ENCODE measurements at regions of chr6 and their contacts with region 1.

Region 1: DNA sequence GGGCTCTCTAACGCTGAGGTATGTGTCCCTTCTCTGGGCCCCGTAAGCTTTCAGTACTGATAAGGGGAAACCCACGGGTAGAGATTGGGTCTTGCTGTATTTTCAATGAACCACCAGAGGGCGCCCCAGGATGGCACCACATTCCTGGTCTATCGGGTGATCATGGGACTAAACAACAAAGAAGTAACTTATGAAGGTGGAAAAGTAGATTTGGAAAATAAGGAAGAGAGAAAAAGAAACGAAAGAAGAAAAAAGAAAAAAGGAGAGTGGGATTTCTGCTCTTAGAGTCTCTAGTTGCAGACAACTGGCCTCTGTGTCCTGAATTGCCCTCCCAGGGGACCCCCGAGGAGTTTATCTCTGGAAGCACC is 93.8 kb downstream of the GMPR start:
- DNase-seq: peak; percentile 88
- ATAC-seq: peak; percentile 95
- H3K4me3 ChIP-seq: peak overlapping the region in 1 of 5 experiments; percentile 31
- H3K4me3 Mint-ChIP-seq: no peak overlapping the region
- H3K27ac ChIP-seq: peak overlapping the region; percentile 60 to 67
- H3K27ac Mint-ChIP-seq: no peak overlapping the region
- H3K4me1 ChIP-seq: peaks cover 12% of the 10 kb centered on the region in 2 donors
- H3K4me1 Mint-ChIP-seq: peaks cover 9% of the 10 kb centered on the region
- H3K27me3 ChIP-seq: no peaks in the 10 kb centered on the region
- H3K27me3 Mint-ChIP-seq: no peaks in the 10 kb centered on the region
- CTCF ChIP-seq: peak; percentile 85

Region 2: GRCh38 chr6:15322781-15323536 is 1009.2 kb before region 1 on chr6:
- CTCF ChIA-PET with region 1: no interaction called
- POLR2A ChIA-PET with region 1: no interaction called
- intact Hi-C with region 1: no loop called
- DNase-seq: no peak
- ATAC-seq: no peak
- H3K4me3 ChIP-seq: no peak overlapping the region
- H3K4me3 Mint-ChIP-seq: no peak overlapping the region
- H3K27ac ChIP-seq: no peak overlapping the region
- H3K27ac Mint-ChIP-seq: no peak overlapping the region
- H3K4me1 ChIP-seq: peaks cover 57 to 58% of the 10 kb centered on the region in 2 donors
- H3K4me1 Mint-ChIP-seq: peaks cover 86% of the 10 kb centered on the region
- H3K27me3 ChIP-seq: no peaks in the 10 kb centered on the region
- H3K27me3 Mint-ChIP-seq: no peaks in the 10 kb centered on the region
- CTCF ChIP-seq: no peak

Region 3: DNA sequence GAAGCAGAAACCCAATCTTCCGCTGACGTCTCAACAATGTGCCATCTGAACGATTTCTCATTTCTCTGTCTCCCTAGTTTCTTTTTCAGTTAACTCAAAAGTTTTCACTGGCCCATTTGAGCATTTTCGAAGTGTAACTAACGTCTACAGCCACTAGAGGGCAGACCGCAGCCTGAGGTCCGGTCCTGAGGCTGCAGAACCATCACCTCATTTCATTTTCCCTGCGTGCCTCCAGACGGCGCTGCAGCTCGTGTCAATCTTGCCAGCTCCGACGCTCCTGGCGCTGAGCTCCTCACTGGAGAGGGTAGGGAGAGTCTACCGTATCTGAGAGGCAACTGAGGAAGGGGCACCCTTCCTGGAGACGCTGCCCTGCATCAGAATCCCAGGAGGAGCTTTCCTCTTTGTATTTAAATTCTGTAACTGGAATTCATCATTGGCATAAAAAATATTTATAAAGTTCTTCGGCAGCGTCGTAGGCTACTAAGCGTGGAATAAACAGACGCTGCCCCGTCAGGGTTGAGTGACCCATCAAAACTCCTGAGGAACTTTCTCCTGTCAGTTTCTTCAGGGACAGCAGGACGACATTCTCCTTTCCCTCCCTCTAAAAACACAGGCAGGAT is 640.8 kb before region 1 on chr6:
- CTCF ChIA-PET with region 1: no interaction called
- POLR2A ChIA-PET with region 1: no interaction called
- intact Hi-C with region 1: loop called (anchors 5 kb)
- DNase-seq: peak; percentile 91
- ATAC-seq: peak; percentile 100
- H3K4me3 ChIP-seq: no peak overlapping the region
- H3K4me3 Mint-ChIP-seq: peak overlapping the region; percentile 39
- H3K27ac ChIP-seq: peak overlapping the region in 1 of 2 donors; percentile 34
- H3K27ac Mint-ChIP-seq: peak overlapping the region; percentile 76
- H3K4me1 ChIP-seq: peaks cover 3 to 8% of the 10 kb centered on the region in 2 donors
- H3K4me1 Mint-ChIP-seq: peaks cover 8% of the 10 kb centered on the region
- H3K27me3 ChIP-seq: peaks cover 0 to 3% (median 0%) of the 10 kb centered on the region in 4 experiments
- H3K27me3 Mint-ChIP-seq: no peaks in the 10 kb centered on the region
- CTCF ChIP-seq: peak; percentile 100

Region 4: DNA sequence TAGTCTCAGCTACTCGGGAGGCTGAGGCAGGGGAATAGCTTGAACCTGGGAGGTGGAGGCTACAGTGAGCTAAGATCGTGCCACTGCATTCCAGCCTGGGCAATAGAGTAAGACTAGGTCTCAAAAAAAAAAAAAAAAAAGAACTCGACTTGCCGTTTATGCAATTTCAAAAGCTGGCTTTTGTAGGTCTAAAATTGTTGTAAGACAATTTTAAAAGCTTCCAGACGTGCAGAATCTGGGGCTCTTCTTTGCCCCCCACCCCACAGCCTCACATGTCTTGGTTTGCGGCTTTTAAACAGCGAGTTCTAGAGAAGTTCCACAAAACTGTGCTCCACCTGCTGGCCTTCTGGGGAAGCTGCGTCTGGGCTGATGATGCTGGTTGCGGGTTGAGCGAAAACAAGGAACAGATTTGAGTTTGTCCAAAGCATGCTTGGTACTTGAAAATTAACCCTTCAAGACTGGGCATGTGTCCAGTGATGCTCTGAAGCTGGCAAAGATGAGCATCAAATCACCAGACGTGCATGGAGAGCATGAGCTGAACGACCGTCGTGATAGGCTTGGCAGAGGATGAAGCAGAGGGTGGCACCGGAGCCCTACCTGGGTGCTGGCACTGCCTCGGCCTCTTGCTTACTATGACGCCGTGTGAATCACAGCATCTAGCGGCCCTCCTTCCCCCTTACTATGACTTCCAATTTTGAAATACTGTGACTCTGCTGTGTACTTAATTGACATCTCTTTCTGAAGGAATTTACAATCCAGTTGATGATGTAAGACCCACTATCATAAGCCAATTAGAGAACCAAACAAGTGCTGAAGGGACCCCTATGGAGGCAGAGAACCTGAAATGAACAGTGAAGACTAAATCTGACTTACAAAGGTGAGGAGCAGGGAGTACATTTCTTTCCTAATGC is 77.6 kb after region 1 on chr6:
- CTCF ChIA-PET with region 1: interaction called, 45 read pairs
- POLR2A ChIA-PET with region 1: no interaction called
- intact Hi-C with region 1: loop called (anchors 1 kb)
- DNase-seq: peak; percentile 75
- ATAC-seq: peak; percentile 64
- H3K4me3 ChIP-seq: no peak overlapping the region
- H3K4me3 Mint-ChIP-seq: peak overlapping the region; percentile 53
- H3K27ac ChIP-seq: no peak overlapping the region
- H3K27ac Mint-ChIP-seq: peak overlapping the region; percentile 66
- H3K4me1 ChIP-seq: peaks cover 10 to 50% of the 10 kb centered on the region in 2 donors
- H3K4me1 Mint-ChIP-seq: peaks cover 60% of the 10 kb centered on the region
- H3K27me3 ChIP-seq: no peaks in the 10 kb centered on the region
- H3K27me3 Mint-ChIP-seq: no peaks in the 10 kb centered on the region
- CTCF ChIP-seq: peak; percentile 77

Region 5: GRCh38 chr6:16514249-16514648 is 182.1 kb after region 1 on chr6:
- CTCF ChIA-PET with region 1: interaction called, 28 read pairs
- POLR2A ChIA-PET with region 1: no interaction called
- intact Hi-C with region 1: loop called (anchors 2 kb)
- DNase-seq: peak; percentile 42
- ATAC-seq: peak; percentile 47
- H3K4me3 ChIP-seq: no peak overlapping the region
- H3K4me3 Mint-ChIP-seq: no peak overlapping the region
- H3K27ac ChIP-seq: no peak overlapping the region
- H3K27ac Mint-ChIP-seq: peak overlapping the region; percentile 33
- H3K4me1 ChIP-seq: peaks cover 4 to 36% of the 10 kb centered on the region in 2 donors
- H3K4me1 Mint-ChIP-seq: peaks cover 42% of the 10 kb centered on the region
- H3K27me3 ChIP-seq: no peaks in the 10 kb centered on the region
- H3K27me3 Mint-ChIP-seq: no peaks in the 10 kb centered on the region
- CTCF ChIP-seq: peak; percentile 50

Region 6: DNA sequence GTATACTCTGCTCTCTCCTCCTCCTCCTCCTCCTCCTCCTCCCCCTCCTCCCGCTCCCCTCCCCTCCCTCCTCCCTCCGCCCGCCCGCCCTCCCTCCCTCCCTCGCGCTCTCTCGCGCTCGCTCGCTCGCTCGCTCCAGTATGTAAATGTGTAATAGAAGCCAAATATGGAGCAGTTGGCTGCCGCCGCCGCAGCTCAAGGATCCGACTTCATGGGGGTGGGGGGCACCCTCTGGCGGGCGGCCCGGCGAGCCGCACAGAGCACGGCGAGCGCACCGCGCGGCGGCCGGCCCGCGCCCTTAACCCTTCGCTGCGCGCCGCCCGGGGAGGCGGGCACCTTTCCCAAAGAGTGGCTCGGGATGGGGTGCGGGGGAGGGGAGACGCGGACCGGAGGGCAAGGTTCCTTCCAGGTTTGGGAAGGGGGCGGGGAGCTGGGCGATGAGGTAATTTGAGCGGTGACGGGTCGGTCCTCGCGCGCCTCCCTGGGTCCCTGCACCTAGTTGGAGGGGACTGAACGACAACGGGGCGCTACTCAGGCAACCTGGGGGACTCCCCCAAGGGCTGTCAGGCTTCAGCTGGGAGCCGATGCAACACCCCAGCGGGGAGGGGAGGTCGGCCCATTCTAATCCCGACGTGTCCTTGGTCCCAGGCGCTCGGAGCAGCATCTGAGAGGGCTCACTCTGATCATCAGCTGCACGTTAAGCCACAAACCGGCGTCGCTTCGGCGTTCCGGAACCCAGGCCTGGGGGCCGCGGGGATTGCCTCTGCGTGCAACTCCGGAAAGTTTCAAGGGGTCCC is 429.5 kb after region 1 on chr6:
- CTCF ChIA-PET with region 1: interaction called, 81 read pairs
- POLR2A ChIA-PET with region 1: no interaction called
- intact Hi-C with region 1: loop called (anchors 1 kb)
- DNase-seq: peak; percentile 85
- ATAC-seq: peak; percentile 52
- H3K4me3 ChIP-seq: peak overlapping the region; percentile 56 to 85 (median 80)
- H3K4me3 Mint-ChIP-seq: peak overlapping the region; percentile 91
- H3K27ac ChIP-seq: peak overlapping the region; percentile 79 to 89
- H3K27ac Mint-ChIP-seq: peak overlapping the region; percentile 93
- H3K4me1 ChIP-seq: peaks cover 13 to 29% of the 10 kb centered on the region in 2 donors
- H3K4me1 Mint-ChIP-seq: peaks cover 38% of the 10 kb centered on the region
- H3K27me3 ChIP-seq: peaks cover 0 to 23% (median 5%) of the 10 kb centered on the region in 4 experiments
- H3K27me3 Mint-ChIP-seq: no peaks in the 10 kb centered on the region
- CTCF ChIP-seq: peak; percentile 18

Region 7: GRCh38 chr6:17086469-17086868 is 754.3 kb after region 1 on chr6:
- CTCF ChIA-PET with region 1: no interaction called
- POLR2A ChIA-PET with region 1: no interaction called
- intact Hi-C with region 1: loop called (anchors 5 kb)
- DNase-seq: peak; percentile 5
- ATAC-seq: no peak
- H3K4me3 ChIP-seq: no peak overlapping the region
- H3K4me3 Mint-ChIP-seq: no peak overlapping the region
- H3K27ac ChIP-seq: no peak overlapping the region
- H3K27ac Mint-ChIP-seq: no peak overlapping the region
- H3K4me1 ChIP-seq: no peaks in the 10 kb centered on the region
- H3K4me1 Mint-ChIP-seq: no peaks in the 10 kb centered on the region
- H3K27me3 ChIP-seq: no peaks in the 10 kb centered on the region
- H3K27me3 Mint-ChIP-seq: peaks cover 7% of the 10 kb centered on the region
- CTCF ChIP-seq: peak; percentile 23